Naive thymus-derived CD4-positive, alpha-beta T cell (primary cell): ENCODE measurements at regions of chr7 and their contacts with region 1.

Region 1: GRCh38 chr7:88127637-88128290 is 92.1 kb downstream of the SRI start:
- DNase-seq: no peak
- ATAC-seq: no peak
- H3K4me3 ChIP-seq: no peak overlapping the region
- H3K4me3 Mint-ChIP-seq: no peak overlapping the region
- H3K27ac ChIP-seq: no peak overlapping the region
- H3K27ac Mint-ChIP-seq: no peak overlapping the region
- H3K4me1 ChIP-seq: no peaks in the 10 kb centered on the region
- H3K4me1 Mint-ChIP-seq: no peaks in the 10 kb centered on the region
- H3K27me3 ChIP-seq: no peaks in the 10 kb centered on the region
- H3K27me3 Mint-ChIP-seq: no peaks in the 10 kb centered on the region

Region 2: DNA sequence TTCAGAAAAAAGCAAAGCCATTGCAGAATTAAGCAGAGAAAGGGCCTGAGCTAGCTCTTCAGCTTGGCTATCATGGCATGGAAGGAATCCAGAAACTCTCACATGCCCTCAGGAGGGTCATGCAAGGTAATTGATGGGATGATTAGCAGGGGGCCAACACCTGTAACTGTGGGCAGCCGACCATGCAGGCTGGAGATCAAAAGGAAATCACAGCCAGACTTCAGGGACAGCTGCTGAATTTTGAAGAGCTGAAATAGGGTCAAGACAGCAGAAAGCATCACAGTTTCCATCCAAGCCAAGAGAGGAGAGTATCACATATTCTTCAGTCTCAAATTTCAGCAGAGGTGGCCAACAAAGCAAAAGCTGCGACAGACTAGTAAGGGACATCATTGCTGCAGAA is 1786.9 kb after region 1 on chr7:
- CTCF ChIA-PET with region 1: no interaction called
- POLR2A ChIA-PET with region 1: no interaction called
- intact Hi-C with region 1: loop called in 1 of 2 experiments (anchors 5 kb)
- DNase-seq: no peak
- ATAC-seq: no peak
- H3K4me3 ChIP-seq: no peak overlapping the region
- H3K4me3 Mint-ChIP-seq: no peak overlapping the region
- H3K27ac ChIP-seq: no peak overlapping the region
- H3K27ac Mint-ChIP-seq: no peak overlapping the region
- H3K4me1 ChIP-seq: no peaks in the 10 kb centered on the region
- H3K4me1 Mint-ChIP-seq: no peaks in the 10 kb centered on the region
- H3K27me3 ChIP-seq: no peaks in the 10 kb centered on the region
- H3K27me3 Mint-ChIP-seq: peaks cover 0 to 5% (median 0%) of the 10 kb centered on the region in 5 donors